ENCODE measurements at regions of chr11 and their contacts with region 1.

Region 1: GRCh38 chr11:128342511-128343134 is 244.7 kb downstream of the ETS1 start:
- DNase-seq: peak; percentile 93
- H3K4me3 Mint-ChIP-seq: peak overlapping the region; percentile 73
- H3K27ac Mint-ChIP-seq: peak overlapping the region; percentile 89
- H3K4me1 Mint-ChIP-seq: peaks cover 93% of the 10 kb centered on the region
- H3K27me3 Mint-ChIP-seq: no peaks in the 10 kb centered on the region

Region 2: DNA sequence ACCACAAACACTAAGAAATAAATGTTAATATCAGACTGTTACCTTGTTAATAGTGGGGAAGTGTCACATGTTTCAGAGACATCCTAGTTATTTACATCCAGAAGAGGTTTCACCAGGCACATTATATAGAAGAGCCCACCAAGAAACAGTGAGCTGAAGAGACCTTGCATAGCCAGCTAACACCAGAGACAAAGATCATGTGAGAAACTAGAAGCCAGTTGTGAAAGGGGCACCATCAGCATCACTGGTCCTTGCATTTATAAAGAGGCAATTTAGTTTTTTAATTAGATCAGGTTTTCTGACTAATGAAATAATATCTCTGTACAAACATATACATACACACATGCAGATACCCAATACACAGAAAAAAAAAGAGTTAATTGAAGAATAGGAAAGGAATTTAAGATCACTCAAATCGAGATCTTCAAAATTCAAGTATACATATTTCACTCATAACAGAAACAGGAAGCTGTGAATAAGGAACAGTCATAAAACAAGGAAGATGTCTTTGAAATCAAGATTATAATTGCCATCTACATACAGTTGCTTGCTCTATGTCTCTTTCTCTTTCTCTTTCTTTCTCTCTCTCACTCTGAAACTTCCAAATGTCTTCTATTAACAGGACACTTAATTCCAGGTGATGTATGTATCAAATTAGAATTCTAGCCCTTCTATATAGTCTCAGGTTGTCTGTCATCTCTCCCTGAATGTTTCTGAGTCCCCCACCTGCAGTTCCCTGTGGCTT is 103.9 kb before region 1 on chr11:
- CTCF ChIA-PET with region 1: no interaction called
- intact Hi-C with region 1: loop called (anchors 2 kb)
- DNase-seq: no peak
- H3K4me3 Mint-ChIP-seq: peak overlapping the region; percentile 41
- H3K27ac Mint-ChIP-seq: peak overlapping the region; percentile 55
- H3K4me1 Mint-ChIP-seq: peaks cover 31% of the 10 kb centered on the region
- H3K27me3 Mint-ChIP-seq: no peaks in the 10 kb centered on the region

Region 3: DNA sequence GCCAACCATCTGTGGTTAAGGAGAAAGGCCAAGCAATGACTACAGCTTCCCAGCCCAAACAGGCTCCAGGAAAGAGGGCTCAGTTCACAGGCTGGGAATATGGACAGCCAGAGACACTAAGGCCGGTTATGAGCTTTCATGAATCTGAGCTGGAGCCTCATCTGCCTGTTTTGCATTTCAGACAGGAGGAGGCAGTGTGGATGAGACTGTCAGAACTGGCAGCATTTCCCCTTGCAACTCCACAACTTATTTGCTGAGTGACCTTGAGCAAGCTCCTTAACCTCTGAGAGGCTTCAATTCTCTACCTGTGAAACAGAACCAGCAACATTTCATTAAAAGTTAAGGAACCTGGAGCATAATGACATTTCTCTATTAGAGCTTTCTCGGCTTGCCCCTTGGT is 19.2 kb before region 1 on chr11:
- CTCF ChIA-PET with region 1: interaction called, 25 read pairs
- intact Hi-C with region 1: loop called (anchors 1 kb)
- DNase-seq: peak; percentile 72
- H3K4me3 Mint-ChIP-seq: peak overlapping the region; percentile 32
- H3K27ac Mint-ChIP-seq: peak overlapping the region; percentile 90
- H3K4me1 Mint-ChIP-seq: peaks cover 87% of the 10 kb centered on the region
- H3K27me3 Mint-ChIP-seq: no peaks in the 10 kb centered on the region

Region 4: DNA sequence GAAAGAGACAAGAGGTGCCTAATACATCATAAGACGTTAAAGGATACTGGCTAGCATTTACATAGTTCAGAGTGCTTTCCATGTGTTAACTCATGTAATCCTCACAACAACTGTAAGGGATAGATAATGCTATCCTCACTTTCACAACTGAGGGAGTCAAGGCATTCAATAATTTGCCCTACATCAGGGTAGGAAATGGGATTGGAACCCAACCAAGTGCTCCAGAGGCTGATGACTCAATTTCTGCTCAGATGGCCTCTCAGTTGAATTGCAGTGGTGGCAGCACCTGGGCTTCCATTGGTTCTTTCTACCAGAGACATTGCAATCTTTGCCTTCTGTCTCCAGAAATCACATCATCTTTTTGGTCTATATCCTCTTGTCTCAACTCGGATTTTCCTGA is 11.9 kb after region 1 on chr11:
- CTCF ChIA-PET with region 1: interaction called, 3 read pairs
- intact Hi-C with region 1: loop called (anchors 1 kb)
- DNase-seq: no peak
- H3K4me3 Mint-ChIP-seq: no peak overlapping the region
- H3K27ac Mint-ChIP-seq: no peak overlapping the region
- H3K4me1 Mint-ChIP-seq: peaks cover 47% of the 10 kb centered on the region
- H3K27me3 Mint-ChIP-seq: no peaks in the 10 kb centered on the region

Region 5: DNA sequence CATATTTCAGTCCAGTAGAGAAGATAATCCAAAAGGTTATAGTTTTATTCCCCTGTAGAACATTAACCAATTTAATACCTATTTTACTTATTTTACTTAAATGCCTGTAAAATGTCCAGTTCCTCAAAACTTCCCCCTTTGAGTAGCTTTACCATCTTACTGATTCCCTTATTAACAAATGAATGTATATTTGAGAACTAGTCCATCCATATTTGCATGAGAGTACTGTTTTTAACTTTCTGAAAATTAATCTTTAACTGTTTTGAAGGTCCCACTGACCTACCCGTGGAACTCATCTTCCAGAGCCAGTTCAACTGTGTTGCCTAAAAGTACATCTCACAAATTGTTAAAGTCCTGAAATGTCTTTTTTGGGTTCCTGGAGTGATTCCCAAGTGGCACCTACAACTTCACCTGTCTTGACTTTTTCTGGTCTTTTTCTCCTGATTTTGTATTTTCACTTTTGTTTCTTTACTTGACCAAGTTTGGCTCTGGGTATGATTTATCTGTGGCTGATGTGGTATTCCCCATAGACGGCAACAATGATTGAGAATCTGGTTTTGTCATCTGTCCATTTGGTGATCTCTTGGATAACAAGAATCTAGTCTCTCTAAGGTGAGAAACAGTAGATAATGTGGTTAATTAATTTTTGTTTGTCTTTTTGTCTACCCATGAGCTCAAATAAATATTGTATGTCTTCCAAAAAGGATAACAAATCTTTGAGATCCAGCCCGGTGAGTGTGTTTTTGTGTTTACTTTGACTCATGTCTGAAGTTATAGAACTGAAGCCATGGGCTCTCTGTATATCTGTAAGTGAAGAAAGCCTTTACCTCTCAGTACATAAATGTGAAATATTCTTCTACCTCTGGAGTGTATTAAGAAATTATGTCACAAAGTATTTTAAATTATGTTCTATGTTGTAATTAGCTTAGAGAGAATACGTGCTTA is 70.5 kb after region 1 on chr11:
- CTCF ChIA-PET with region 1: no interaction called
- intact Hi-C with region 1: loop called (anchors 2 kb)
- DNase-seq: no peak
- H3K4me3 Mint-ChIP-seq: no peak overlapping the region
- H3K27ac Mint-ChIP-seq: peak overlapping the region; percentile 2
- H3K4me1 Mint-ChIP-seq: peaks cover 72% of the 10 kb centered on the region
- H3K27me3 Mint-ChIP-seq: no peaks in the 10 kb centered on the region

Region 6: GRCh38 chr11:128582496-128583366 is 240.1 kb after region 1 on chr11:
- CTCF ChIA-PET with region 1: no interaction called
- intact Hi-C with region 1: loop called (anchors 2 kb)
- DNase-seq: peak; percentile 50
- H3K4me3 Mint-ChIP-seq: peak overlapping the region; percentile 69
- H3K27ac Mint-ChIP-seq: peak overlapping the region; percentile 78
- H3K4me1 Mint-ChIP-seq: peaks cover 62% of the 10 kb centered on the region
- H3K27me3 Mint-ChIP-seq: no peaks in the 10 kb centered on the region